Ovary (tissue), 10 donors: ENCODE measurements at regions of chr6 and their contacts with region 1.

Region 1: DNA sequence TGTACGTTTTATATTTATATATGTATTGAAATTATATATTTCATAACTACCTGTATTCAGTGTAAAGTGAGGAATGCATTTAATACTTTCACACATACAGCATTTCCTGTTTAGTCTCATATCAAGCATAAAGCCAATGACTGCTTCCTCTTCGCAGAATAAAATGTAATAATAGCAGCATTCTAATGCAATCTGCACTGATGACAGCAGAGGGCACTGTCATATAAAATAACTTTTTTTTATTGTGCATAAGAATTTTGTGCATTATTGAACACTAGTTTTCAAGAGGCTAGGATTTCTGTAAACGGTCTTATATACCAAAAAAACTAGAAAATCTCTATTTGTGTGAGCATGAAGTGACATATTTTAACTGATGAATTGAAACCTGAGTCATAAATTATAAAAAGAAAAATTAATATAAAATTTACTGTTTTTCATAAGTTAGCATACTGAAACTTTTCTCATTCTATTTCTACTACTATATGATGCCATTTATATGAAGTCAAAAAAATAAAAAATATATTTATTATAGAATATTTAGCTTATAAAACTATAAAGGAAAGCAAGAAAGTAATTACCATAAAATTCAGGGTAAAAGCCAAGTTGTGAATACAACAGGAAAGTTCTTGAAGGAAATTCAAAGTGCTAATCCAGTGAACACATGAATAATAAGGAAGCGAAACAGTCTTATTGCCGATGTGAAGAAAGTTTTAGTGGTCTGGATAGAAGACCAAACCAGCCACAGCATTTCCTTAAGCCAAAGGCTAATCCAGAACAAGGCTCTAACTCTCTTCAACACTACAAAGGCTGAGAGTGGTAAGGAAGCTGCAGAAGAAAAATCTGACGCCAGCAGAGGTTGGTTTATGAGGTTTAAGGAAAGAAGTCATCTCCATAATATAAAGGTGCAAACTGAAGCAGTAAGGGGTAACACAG is 36.3 kb downstream of the RNF146 start:
- DNase-seq: peak in 2 of 5 donors; percentile 25 to 50
- H3K4me3 ChIP-seq: no peak overlapping the region
- H3K27ac ChIP-seq: no peak overlapping the region
- H3K4me1 ChIP-seq: no peaks in the 10 kb centered on the region
- H3K27me3 ChIP-seq: no peaks in the 10 kb centered on the region
- CTCF ChIP-seq: peak; percentile 24 to 45 (median 28)
- EP300 ChIP-seq: no peak
- POLR2A ChIP-seq: no peak

Region 2: GRCh38 chr6:127343809-127344659 is 41.0 kb after region 1 on chr6:
- intact Hi-C with region 1: no loop called
- DNase-seq: no peak
- H3K4me3 ChIP-seq: peak overlapping the region; percentile 49
- H3K27ac ChIP-seq: peak overlapping the region; percentile 31 to 54
- H3K4me1 ChIP-seq: peaks cover 10% of the 10 kb centered on the region
- H3K27me3 ChIP-seq: no peaks in the 10 kb centered on the region
- CTCF ChIP-seq: no peak
- EP300 ChIP-seq: no peak
- POLR2A ChIP-seq: no peak

Region 3: GRCh38 chr6:127547215-127547614 is 244.2 kb after region 1 on chr6:
- intact Hi-C with region 1: loop called in 3 of 4 experiments (anchors 5 to 10 kb)
- DNase-seq: no peak
- H3K4me3 ChIP-seq: no peak overlapping the region
- H3K27ac ChIP-seq: no peak overlapping the region
- H3K4me1 ChIP-seq: no peaks in the 10 kb centered on the region
- H3K27me3 ChIP-seq: no peaks in the 10 kb centered on the region
- CTCF ChIP-seq: no peak
- EP300 ChIP-seq: no peak
- POLR2A ChIP-seq: no peak